GM12878 (cell line): ENCODE measurements at regions of chr11 and their contacts with region 1.

Region 1: GRCh38 chr11:8263769-8264410 is at the start of gene LMO1:
- DNase-seq: no peak
- ATAC-seq: peak; percentile 87
- H3K4me3 ChIP-seq: peak within 1 kb of the TSS; percentile 50
- H3K27ac ChIP-seq: no peak within 1 kb of the TSS
- H3K4me1 ChIP-seq: no peaks in the 10 kb centered on the region
- H3K27me3 ChIP-seq: peaks cover 20 to 24% of the 10 kb centered on the region in 2 experiments
- CTCF ChIP-seq: peak; percentile 83 to 93 (median 92)
- EP300 ChIP-seq: no peak
- POLR2A ChIP-seq: no peak
- RAD21 ChIP-seq: peak; percentile 52
- polyA plus RNA-seq, gene LMO1: not detected

Region 2: DNA sequence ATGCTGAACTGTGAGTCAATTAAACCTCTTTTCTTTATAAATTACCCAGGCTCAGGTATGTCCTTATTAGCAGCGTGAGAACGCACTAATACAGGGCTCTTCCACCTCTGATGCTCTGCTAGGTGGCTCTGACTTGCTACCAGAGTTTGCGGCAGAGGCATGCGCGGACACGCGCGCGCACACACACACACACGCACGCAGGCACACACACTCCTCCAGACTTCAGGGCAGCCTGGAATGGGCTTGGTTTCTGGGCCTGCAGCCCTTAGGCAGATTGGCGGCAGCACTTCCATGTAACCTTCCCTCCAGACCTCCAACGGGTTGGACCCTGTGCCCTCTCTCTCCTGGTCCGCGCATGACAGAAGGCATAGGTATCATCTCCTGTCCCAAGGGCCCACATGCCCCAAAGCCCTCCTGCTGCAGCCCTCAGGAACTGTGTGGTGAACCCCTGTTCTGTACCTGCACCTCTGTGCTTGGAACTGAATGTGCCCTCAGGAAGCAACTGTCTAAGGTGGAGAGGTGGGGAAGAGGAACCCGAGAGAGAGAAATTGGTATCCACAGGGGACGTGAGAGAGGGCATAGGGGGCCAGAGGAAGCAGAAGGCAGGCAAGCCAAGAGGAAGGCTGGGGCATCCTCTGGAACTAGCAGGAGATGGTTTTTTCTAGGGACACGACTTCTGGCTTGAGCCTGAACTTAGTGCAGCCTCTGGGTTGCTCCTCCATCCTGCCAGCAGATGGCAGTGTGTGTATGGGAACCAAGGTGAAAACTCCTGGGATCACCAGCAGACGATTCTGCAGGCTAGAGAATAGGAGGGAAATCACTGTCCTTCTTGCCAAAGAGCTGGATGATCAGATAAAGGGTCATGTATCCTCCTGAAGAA is 71.6 kb before region 1 on chr11:
- CTCF ChIA-PET with region 1: interaction called, 35 read pairs
- POLR2A ChIA-PET with region 1: interaction called, 3 read pairs
- RAD21 ChIA-PET with region 1: interaction called, 5 read pairs
- SMC1A ChIA-PET with region 1: interaction called, 13 read pairs
- in situ Hi-C with region 1: no loop called
- intact Hi-C with region 1: loop called (anchors 5 kb)
- DNase-seq: no peak
- ATAC-seq: peak; percentile 94
- H3K4me3 ChIP-seq: no peak overlapping the region
- H3K27ac ChIP-seq: no peak overlapping the region
- H3K4me1 ChIP-seq: no peaks in the 10 kb centered on the region
- H3K27me3 ChIP-seq: no peaks in the 10 kb centered on the region; a peak in 1 of 4 replicates
- CTCF ChIP-seq: peak; percentile 88 to 96 (median 90)
- EP300 ChIP-seq: no peak
- POLR2A ChIP-seq: no peak
- RAD21 ChIP-seq: peak; percentile 84

Region 3: GRCh38 chr11:8225589-8226036 is 38.3 kb before region 1 on chr11:
- CTCF ChIA-PET with region 1: interaction called, 15 read pairs
- POLR2A ChIA-PET with region 1: no interaction called
- RAD21 ChIA-PET with region 1: interaction called, 3 read pairs
- SMC1A ChIA-PET with region 1: interaction called, 5 read pairs
- in situ Hi-C with region 1: no loop called
- intact Hi-C with region 1: loop called (anchors 1 kb)
- DNase-seq: no peak
- ATAC-seq: peak; percentile 87
- H3K4me3 ChIP-seq: no peak overlapping the region
- H3K27ac ChIP-seq: no peak overlapping the region
- H3K4me1 ChIP-seq: no peaks in the 10 kb centered on the region; the same call in 1 of the 2 replicates
- H3K27me3 ChIP-seq: no peaks in the 10 kb centered on the region
- CTCF ChIP-seq: peak; percentile 88 to 95 (median 90)
- EP300 ChIP-seq: no peak
- POLR2A ChIP-seq: no peak
- RAD21 ChIP-seq: peak; percentile 85

Region 4: GRCh38 chr11:8247312-8247711 is 16.6 kb before region 1 on chr11:
- CTCF ChIA-PET with region 1: interaction called, 13 read pairs
- POLR2A ChIA-PET with region 1: interaction called, 3 read pairs
- RAD21 ChIA-PET with region 1: interaction called, 8 read pairs
- SMC1A ChIA-PET with region 1: interaction called, 4 read pairs
- in situ Hi-C with region 1: no loop called
- intact Hi-C with region 1: no loop called
- DNase-seq: no peak
- ATAC-seq: peak; percentile 88
- H3K4me3 ChIP-seq: no peak overlapping the region
- H3K27ac ChIP-seq: no peak overlapping the region
- H3K4me1 ChIP-seq: no peaks in the 10 kb centered on the region
- H3K27me3 ChIP-seq: peaks cover 1 to 2% of the 10 kb centered on the region in 2 experiments; a peak in 2 of 4 replicates
- CTCF ChIP-seq: peak; percentile 36 to 57 (median 55); a peak in 5 of 6 replicates
- EP300 ChIP-seq: no peak
- POLR2A ChIP-seq: no peak
- RAD21 ChIP-seq: peak; percentile 38; the same call in 1 of the 2 replicates

Region 5: DNA sequence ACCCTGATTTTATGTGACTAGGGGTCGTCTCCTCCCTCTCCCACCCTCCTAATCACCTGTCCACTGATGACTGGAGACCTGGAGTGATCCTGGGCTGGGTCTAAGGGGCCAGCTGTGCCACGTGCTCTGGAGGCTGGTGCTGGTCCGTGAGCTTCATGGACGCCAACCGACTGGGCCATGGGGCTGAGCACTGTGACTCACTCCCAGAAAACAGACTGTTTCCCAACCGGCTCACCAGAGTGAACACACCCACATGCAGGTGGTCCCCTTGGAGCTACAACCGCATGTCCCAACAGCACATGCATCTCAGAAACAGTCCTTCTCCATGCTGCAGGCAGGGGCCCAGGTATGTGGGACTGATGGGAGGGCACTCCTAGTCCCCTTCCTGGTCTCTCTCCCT is 13.8 kb after region 1 on chr11:
- CTCF ChIA-PET with region 1: interaction called, 15 read pairs
- POLR2A ChIA-PET with region 1: no interaction called
- RAD21 ChIA-PET with region 1: no interaction called
- SMC1A ChIA-PET with region 1: interaction called, 3 read pairs
- in situ Hi-C with region 1: no loop called
- intact Hi-C with region 1: no loop called
- DNase-seq: no peak
- ATAC-seq: no peak
- H3K4me3 ChIP-seq: no peak overlapping the region
- H3K27ac ChIP-seq: no peak overlapping the region
- H3K4me1 ChIP-seq: no peaks in the 10 kb centered on the region
- H3K27me3 ChIP-seq: no peaks in the 10 kb centered on the region; a peak in 1 of 4 replicates
- CTCF ChIP-seq: no peak
- EP300 ChIP-seq: no peak
- POLR2A ChIP-seq: no peak
- RAD21 ChIP-seq: no peak